ENCODE measurements at regions of chr2 and their contacts with region 1.

Region 1: DNA sequence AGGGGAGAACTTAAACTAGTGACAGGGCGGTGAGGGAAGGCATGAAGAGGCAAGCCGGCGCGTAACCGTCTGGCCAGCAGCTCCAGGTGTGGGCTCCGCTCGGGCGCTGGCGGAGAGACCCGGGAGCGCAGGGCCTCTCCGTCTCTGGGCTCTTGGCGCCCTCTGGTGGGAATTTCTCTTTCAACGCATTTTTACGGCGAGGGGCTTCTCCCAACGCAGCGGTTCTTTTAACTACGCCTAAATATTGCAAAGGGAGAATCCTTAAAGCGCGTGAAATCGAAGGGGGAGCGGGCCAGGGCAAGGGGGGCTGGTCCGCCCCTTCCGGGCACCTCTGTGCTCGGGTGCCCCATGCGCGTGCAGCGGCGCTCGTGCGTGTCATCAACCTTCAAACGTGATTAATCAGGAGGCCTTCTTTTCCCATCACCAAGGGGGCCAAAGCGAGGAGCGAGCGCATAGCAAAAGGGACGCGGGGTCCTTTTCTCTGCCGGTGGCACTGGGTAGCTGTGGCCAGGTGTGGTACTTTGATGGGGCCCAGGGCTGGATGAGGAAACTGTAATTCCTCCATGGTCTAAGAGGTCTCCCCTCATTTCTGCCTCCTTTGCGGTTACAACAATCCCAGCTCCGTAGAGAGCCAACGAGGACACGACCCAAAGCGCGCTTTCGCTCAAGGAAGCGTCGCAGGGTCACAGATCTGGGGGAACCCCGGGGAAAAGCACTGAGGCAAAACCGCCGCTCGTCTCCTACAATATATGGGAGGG is 762 bp upstream of the GAD1 start:
- DNase-seq: peak in 2 of 3 donors; percentile 67 to 79
- ATAC-seq: peak; percentile 72
- H3K4me3 ChIP-seq: no peak overlapping the region
- H3K4me1 ChIP-seq: peaks cover 35% of the 10 kb centered on the region
- CTCF ChIP-seq: peak; percentile 47

Region 2: GRCh38 chr2:170235860-170236679 is 579.9 kb before region 1 on chr2:
- intact Hi-C with region 1: loop called in 1 of 2 experiments (anchors 10 kb)
- DNase-seq: peak in 1 of 3 donors; percentile 49
- ATAC-seq: no peak
- H3K4me3 ChIP-seq: no peak overlapping the region
- H3K4me1 ChIP-seq: no peaks in the 10 kb centered on the region
- CTCF ChIP-seq: no peak

Region 3: DNA sequence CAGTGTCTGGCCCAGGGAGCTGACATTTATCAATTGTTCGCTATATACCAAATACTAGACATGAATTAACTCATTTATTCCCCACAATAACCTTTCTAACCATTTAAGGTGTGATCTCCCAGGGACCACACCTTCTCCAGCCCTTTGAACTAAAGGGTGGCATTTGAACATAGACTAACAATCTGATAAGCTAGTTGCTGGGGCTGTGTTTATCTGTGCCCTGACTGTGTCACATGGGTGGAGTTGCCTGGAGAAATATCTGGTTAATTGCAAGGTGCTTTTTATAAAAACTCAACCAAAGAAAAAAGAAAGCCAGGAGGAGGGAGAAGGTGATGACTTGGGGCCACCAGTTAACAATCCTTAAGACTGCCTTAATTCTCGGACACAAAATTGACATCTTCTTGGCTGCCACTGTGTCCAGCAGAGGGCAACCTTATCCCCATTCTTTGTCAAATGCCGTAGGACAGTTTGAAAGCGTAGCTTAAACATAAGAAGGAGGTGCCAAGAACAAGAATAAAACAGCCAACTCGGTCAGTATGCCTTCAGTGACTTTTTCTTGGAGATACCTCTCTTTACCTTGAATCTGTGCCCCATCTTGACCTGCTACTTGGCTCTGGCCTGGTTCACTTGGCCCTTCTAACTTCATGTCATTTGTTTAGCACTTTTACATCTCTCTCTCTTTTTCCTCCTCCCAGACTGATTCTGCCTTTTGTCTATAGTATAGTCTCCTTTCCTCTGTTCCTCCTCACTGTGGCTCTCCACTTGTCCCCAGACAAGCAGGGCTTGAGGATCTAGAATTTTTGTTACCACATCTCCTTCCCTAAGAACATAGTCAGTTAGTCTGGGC is 454.6 kb before region 1 on chr2:
- intact Hi-C with region 1: loop called in 1 of 2 experiments (anchors 10 kb)
- DNase-seq: peak in 2 of 3 donors; percentile 29 to 79
- ATAC-seq: peak; percentile 79
- H3K4me3 ChIP-seq: no peak overlapping the region
- H3K4me1 ChIP-seq: peaks cover 5% of the 10 kb centered on the region
- CTCF ChIP-seq: no peak

Region 4: GRCh38 chr2:170396799-170397459 is 419.0 kb before region 1 on chr2:
- intact Hi-C with region 1: loop called in 1 of 2 experiments (anchors 10 kb)
- DNase-seq: no peak
- ATAC-seq: peak; percentile 46
- H3K4me3 ChIP-seq: no peak overlapping the region
- H3K4me1 ChIP-seq: no peaks in the 10 kb centered on the region
- CTCF ChIP-seq: no peak

Region 5: DNA sequence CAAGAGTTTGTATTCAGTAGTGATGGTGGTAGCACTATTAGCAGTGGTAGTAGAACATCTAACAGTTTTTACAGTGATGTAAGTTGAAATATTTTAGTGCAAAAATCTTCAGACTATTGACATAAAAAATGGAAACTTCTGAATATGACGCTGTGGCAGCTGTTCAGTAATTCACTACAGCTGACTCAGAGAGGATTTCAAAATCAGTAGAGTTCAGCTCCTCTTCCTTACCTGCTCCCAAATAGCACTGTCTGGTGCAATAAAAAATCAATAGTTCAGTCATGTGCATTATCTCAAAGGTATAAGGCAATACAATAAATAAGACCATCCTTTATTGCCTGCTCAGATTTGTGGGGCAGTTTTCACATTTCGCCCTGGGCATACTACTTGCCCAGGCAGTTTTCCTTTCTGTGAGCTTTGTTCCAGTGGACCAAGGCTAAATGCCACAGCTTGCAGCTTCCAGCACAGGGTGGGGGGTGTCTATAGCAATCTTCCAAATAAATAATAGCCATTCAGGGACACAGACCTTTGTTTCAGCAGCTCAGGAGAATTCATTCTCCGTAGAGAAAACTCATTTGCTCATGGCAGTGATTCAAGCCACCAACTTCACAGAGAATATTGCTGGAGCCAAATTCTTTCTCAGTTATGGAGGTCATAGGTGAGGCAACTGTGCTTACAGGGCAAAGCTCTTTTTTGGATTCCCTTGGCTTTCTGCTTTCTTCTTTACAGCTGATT is 79.3 kb after region 1 on chr2:
- intact Hi-C with region 1: no loop called
- DNase-seq: no peak
- ATAC-seq: no peak
- H3K4me3 ChIP-seq: no peak overlapping the region
- H3K4me1 ChIP-seq: no peaks in the 10 kb centered on the region
- CTCF ChIP-seq: no peak

Measured in mucosa of descending colon (tissue), 3 donors.